PC-3 (cell line): ENCODE measurements at regions of chr4 and their contacts with region 1.

Region 1: GRCh38 chr4:121096629-121097028 is 24.3 kb upstream of the NDNF start:
- DNase-seq: peak; percentile 50
- ATAC-seq: no peak
- H3K4me3 ChIP-seq: no peak overlapping the region
- H3K27ac ChIP-seq: peak overlapping the region; percentile 20; the same call in 1 of the 2 replicates
- H3K4me1 ChIP-seq: no peaks in the 10 kb centered on the region
- H3K27me3 ChIP-seq: no peaks in the 10 kb centered on the region
- CTCF ChIP-seq: peak; percentile 61

Region 2: GRCh38 chr4:120286813-120287212 is 809.8 kb before region 1 on chr4:
- CTCF ChIA-PET with region 1: no interaction called
- POLR2A ChIA-PET with region 1: no interaction called
- intact Hi-C with region 1: loop called (anchors 10 kb)
- DNase-seq: peak; percentile 3
- ATAC-seq: no peak
- H3K4me3 ChIP-seq: no peak overlapping the region
- H3K27ac ChIP-seq: no peak overlapping the region
- H3K4me1 ChIP-seq: no peaks in the 10 kb centered on the region
- H3K27me3 ChIP-seq: no peaks in the 10 kb centered on the region
- CTCF ChIP-seq: peak; percentile 55

Region 3: DNA sequence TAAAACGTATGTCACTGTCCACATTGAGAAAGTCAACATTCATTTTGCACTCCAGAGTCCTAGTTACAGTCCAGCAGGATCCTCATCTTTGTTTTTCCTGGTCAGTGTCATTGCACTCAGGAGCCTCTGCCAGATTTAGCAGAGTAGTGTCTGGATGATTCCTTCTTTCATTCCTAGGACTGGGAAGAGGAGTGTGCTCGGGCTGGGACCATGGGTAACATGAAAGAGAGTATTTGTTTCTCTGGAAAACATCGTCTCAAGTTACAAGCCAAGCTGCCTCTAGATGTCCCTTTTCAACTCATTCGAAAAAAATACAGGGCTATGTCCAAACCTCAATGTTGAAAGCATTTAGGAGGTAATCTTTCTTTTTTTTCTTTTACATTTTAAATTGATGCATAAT is 137.4 kb after region 1 on chr4:
- CTCF ChIA-PET with region 1: no interaction called
- POLR2A ChIA-PET with region 1: no interaction called
- intact Hi-C with region 1: no loop called
- DNase-seq: no peak
- ATAC-seq: no peak
- H3K4me3 ChIP-seq: no peak overlapping the region
- H3K27ac ChIP-seq: no peak overlapping the region
- H3K4me1 ChIP-seq: no peaks in the 10 kb centered on the region
- H3K27me3 ChIP-seq: peaks cover 7% of the 10 kb centered on the region; the same call in 1 of the 2 replicates
- CTCF ChIP-seq: no peak